CD8-positive, alpha-beta T cell (primary cell): ENCODE measurements at regions of chr13 and their contacts with region 1.

Region 1: GRCh38 chr13:97432917-97433726 is 847 bp upstream of the RAP2A start:
- DNase-seq: peak; percentile 95 to 99 (median 98)
- ATAC-seq: peak; percentile 70
- H3K4me3 ChIP-seq: peak overlapping the region; percentile 79 to 100
- H3K4me3 Mint-ChIP-seq: peak overlapping the region; percentile 94
- H3K27ac ChIP-seq: peak overlapping the region; percentile 97 to 100
- H3K27ac Mint-ChIP-seq: peak overlapping the region; percentile 100
- H3K4me1 ChIP-seq: peaks cover 12% of the 10 kb centered on the region
- H3K4me1 Mint-ChIP-seq: peaks cover 30% of the 10 kb centered on the region
- H3K27me3 ChIP-seq: no peaks in the 10 kb centered on the region
- H3K27me3 Mint-ChIP-seq: no peaks in the 10 kb centered on the region
- CTCF ChIP-seq: no peak

Region 2: DNA sequence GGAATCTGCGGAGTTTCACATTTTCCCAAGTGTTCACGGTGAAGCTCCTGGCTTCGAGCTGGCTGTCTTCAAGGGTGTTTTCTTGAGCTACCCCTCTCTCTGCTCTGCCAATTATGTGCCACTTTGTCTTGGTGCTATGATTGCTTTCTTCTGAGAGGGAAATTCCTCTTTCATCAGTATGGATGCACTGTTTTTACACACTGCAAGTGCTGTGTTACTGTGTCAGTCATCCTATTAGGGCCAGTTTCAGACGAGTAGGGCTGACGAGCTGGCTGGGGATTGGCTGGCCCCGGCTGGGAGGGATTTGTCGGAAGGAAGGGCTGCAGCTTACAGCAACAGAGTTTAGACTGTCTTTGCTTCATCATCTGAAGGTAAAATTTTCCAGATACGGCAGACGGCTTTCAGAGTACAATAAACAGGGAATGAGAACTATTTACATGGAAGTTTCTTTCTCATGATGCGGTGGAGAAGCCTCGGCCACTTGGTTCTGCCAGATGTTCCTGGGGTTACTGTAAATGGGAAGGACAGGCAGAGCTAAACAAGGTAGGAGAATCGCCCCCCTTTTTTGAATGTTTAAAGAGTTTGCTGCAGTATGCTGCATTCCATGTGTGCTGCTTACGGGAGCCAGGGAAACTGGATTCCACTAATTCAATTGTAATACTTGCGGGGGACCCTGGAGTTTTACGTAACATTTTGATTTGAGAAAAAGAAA is 211.0 kb before region 1 on chr13 and contains the start of gene MBNL2:
- CTCF ChIA-PET with region 1: no interaction called
- POLR2A ChIA-PET with region 1: interaction called, 15 read pairs
- intact Hi-C with region 1: loop called (anchors 1 to 2 kb)
- DNase-seq: peak; percentile 72 to 93 (median 85)
- ATAC-seq: peak; percentile 97
- H3K4me3 ChIP-seq: peak within 1 kb of the TSS; percentile 57 to 76
- H3K4me3 Mint-ChIP-seq: peak within 1 kb of the TSS; percentile 88
- H3K27ac ChIP-seq: peak within 1 kb of the TSS; percentile 81 to 86
- H3K27ac Mint-ChIP-seq: peak within 1 kb of the TSS; percentile 93
- H3K4me1 ChIP-seq: peaks cover 39% of the 10 kb centered on the region
- H3K4me1 Mint-ChIP-seq: peaks cover 42% of the 10 kb centered on the region
- H3K27me3 ChIP-seq: no peaks in the 10 kb centered on the region
- H3K27me3 Mint-ChIP-seq: no peaks in the 10 kb centered on the region
- CTCF ChIP-seq: no peak
- total RNA-seq, gene MBNL2: 31.2 to 33.2 TPM

Region 3: GRCh38 chr13:97367016-97367822 is 65.9 kb before region 1 on chr13:
- CTCF ChIA-PET with region 1: no interaction called
- POLR2A ChIA-PET with region 1: interaction called, 10 read pairs
- intact Hi-C with region 1: no loop called
- DNase-seq: peak in 1 of 9 experiments; percentile 12
- ATAC-seq: no peak
- H3K4me3 ChIP-seq: no peak overlapping the region
- H3K4me3 Mint-ChIP-seq: no peak overlapping the region
- H3K27ac ChIP-seq: no peak overlapping the region
- H3K27ac Mint-ChIP-seq: no peak overlapping the region
- H3K4me1 ChIP-seq: peaks cover 5% of the 10 kb centered on the region
- H3K4me1 Mint-ChIP-seq: peaks cover 18% of the 10 kb centered on the region
- H3K27me3 ChIP-seq: no peaks in the 10 kb centered on the region
- H3K27me3 Mint-ChIP-seq: no peaks in the 10 kb centered on the region
- CTCF ChIP-seq: no peak

Region 4: DNA sequence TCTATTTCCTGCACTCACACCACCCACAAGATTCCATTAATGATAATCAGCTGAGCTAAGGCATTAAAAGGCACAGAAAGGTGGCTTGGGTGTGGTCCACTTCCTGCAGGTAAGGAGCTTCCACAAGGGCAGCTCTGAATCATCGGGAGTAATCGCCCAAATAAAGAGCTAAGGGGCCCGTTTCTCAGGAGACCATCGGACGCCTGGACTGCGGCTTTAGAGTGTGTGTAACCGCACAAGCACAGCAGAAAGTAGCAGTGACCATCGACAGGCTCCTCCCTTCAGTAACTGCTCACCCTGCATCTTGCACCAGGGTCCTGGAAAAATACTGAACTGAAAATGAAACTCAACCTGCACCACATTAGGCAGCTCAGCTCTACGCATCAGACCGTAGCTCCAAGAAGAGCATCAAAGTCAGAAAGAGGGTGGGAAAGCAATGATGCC is 1137.8 kb after region 1 on chr13:
- CTCF ChIA-PET with region 1: no interaction called
- POLR2A ChIA-PET with region 1: no interaction called
- intact Hi-C with region 1: loop called (anchors 5 to 10 kb)
- DNase-seq: peak in 5 of 9 experiments; percentile 32 to 70 (median 52)
- ATAC-seq: peak; percentile 62
- H3K4me3 ChIP-seq: peak overlapping the region; percentile 51 to 55
- H3K4me3 Mint-ChIP-seq: peak overlapping the region; percentile 90
- H3K27ac ChIP-seq: peak overlapping the region; percentile 46 to 68
- H3K27ac Mint-ChIP-seq: peak overlapping the region; percentile 97
- H3K4me1 ChIP-seq: peaks cover 88% of the 10 kb centered on the region
- H3K4me1 Mint-ChIP-seq: peaks cover 93% of the 10 kb centered on the region
- H3K27me3 ChIP-seq: no peaks in the 10 kb centered on the region
- H3K27me3 Mint-ChIP-seq: no peaks in the 10 kb centered on the region
- CTCF ChIP-seq: no peak